GM10248 (cell line): ENCODE measurements at regions of chr3 and their contacts with region 1.

Region 1: DNA sequence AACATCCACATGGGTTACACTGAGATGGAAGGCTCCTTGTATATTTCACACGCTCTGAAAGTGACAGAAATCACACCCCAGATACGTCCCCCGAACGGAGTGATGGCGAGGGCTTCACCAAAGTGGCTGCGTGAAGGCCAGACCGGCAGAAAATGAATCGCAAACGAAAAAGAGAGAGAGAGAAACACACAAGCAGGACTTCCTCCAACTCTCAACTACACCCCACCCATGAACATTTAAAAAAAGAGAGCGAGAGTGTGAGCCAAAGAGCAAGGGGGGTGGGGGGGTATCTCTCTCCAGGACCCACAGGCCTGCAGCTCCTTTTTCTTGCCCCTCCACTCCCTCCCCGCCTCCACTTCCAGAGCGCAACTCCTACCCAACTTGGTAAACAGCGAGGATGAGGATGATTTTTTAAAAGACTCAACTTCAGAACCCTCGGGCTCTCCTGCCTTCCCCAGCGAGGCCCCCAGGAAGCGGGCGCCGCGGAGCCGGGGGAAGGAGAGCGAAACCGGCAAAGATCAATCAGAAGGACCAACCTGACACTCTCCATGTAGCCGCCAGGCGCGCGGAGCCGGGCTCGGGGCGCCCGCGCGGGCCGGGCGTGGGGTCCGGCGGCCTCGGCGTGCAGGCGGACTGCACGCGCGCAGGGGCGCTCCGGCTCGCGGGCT is 519.1 kb downstream of the FOXP1 start:
- DNase-seq: peak; percentile 21
- CTCF ChIP-seq: no peak

Region 2: DNA sequence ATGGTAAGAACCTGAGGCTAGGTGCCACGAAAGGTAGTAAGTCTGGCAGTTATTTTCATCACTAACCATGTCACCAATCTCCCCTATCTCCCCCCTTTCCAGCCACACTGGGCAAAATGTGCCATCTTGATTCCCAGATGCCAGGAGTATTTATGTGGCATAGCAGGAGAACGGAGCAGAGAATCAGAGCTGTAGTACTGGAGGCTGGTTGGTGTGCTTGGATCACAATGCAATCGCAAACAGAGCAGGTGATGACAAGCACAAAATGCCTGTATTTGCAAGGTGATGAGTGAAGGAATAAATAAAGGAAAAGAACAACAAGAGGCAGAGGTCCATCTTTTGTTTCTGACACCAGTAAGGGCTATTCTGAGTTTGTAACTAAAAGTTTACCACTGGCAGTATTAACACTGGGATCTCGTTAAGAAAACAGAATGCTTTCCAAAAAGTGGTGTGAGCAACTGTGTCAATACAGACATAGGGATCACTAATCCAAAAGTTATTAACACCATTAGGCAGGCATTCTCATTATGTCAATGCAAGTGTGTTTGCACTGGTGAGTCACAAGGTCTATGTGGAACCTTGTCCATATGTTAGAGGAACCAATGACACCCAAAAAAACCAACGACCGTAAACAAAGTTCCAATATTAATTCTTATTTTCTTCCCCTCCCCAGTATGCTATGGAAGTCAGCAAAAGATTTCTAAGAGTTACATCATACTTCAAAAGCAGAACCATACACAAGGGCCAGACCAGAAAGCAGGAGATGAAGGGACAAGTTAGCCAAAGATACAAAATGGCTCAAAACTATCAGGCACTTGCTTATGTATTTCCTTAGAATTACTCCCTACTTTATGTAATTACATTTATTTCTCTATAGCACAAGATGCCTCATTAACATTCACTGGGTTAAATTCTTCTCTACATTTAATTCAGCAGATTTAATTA is 37.5 kb before region 1 on chr3:
- CTCF ChIA-PET with region 1: no interaction called
- POLR2A ChIA-PET with region 1: no interaction called
- DNase-seq: no peak
- CTCF ChIP-seq: no peak

Region 3: DNA sequence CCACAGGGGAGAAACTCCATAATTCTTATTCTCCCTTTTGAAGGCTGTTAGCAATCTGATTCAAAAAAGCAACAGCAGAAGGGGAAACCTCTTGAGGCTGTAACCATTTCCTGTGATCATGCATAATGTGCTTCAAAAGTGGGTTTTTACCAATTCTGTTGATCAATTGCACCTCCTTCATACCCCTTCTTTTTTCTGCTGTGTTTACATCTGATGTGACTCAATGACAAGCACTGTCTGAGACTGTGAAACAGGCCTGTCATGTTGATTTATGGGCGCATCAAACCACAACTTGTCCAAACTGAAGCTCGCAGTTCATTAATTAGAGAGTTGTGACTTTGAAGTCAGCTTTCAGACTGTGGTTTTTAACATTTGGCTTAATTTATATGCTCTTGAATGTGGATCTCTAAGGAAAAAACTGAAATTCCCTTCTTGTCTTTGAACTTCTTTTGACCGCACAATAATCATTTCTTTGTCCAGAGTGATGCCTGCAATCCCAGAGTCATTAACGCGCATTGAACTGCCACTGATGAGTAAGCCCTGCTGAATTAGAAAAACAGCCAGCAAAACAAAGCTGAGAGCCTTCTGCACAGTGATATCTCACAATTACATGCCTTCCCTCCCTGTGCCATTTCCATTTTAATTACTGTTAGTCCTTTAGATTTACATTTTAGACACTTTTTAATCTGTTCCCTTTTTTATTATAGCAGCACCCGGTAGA is 13.7 kb before region 1 on chr3:
- CTCF ChIA-PET with region 1: interaction called, 10 read pairs
- POLR2A ChIA-PET with region 1: no interaction called
- DNase-seq: no peak
- CTCF ChIP-seq: no peak

Region 4: GRCh38 chr3:71076361-71077002 is 12.1 kb after region 1 on chr3:
- CTCF ChIA-PET with region 1: interaction called, 11 read pairs
- POLR2A ChIA-PET with region 1: no interaction called
- DNase-seq: no peak
- CTCF ChIP-seq: no peak

Region 5: DNA sequence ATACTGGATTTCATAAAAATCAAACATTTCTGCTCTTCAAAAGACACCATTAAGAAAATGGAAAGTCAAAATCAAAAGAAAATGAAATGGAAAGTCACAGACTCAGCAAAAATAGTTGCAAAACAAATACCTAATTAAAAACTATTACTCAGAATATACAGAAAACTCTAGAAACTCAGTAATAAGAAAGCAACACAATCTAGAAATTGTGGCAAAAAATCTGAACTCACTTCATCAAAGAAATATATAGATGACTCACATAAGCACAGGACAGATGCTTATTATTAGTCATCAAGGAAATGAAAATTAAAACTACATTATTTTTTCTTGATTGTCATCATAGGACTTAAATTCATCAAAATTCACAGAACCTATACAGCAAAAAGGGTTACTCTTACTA is 1353.8 kb after region 1 on chr3:
- CTCF ChIA-PET with region 1: no interaction called
- POLR2A ChIA-PET with region 1: no interaction called
- DNase-seq: no peak
- CTCF ChIP-seq: no peak